ENCODE measurements at regions of chr6 and their contacts with region 1.

Region 1: DNA sequence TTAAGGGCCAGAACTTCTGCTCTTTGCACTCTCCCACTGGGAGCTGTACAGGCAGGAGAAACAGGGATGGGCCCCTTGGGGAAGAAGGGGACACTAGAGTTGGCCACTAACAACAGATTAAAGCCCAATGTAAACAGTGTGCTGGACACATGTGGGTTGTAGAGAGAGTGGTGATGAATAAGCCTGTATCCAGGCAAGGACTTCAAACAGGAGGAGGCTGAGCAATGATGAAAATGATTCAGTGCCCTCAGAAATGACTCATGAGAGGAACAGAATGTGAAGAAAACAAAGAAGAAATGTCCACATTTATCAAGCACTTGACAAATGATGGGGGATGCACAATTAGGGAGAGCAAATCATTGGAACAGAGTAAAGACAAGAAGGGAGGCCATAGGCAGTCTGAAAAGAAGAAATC is 242.3 kb downstream of the TBX18 start:
- DNase-seq: peak; percentile 43 to 69
- H3K4me3 ChIP-seq: no peak overlapping the region
- H3K4me3 Mint-ChIP-seq: peak overlapping the region; percentile 37
- H3K27ac Mint-ChIP-seq: peak overlapping the region; percentile 3
- H3K4me1 ChIP-seq: peaks cover 62% of the 10 kb centered on the region
- H3K4me1 Mint-ChIP-seq: peaks cover 36% of the 10 kb centered on the region
- H3K27me3 ChIP-seq: no peaks in the 10 kb centered on the region
- H3K27me3 Mint-ChIP-seq: no peaks in the 10 kb centered on the region
- CTCF ChIP-seq: no peak

Region 2: GRCh38 chr6:84269947-84270733 is 252.0 kb before region 1 on chr6:
- CTCF ChIA-PET with region 1: no interaction called
- POLR2A ChIA-PET with region 1: no interaction called
- intact Hi-C with region 1: loop called (anchors 2 kb)
- DNase-seq: peak in 1 of 2 experiments; percentile 45
- H3K4me3 ChIP-seq: no peak overlapping the region
- H3K4me3 Mint-ChIP-seq: peak overlapping the region; percentile 50
- H3K27ac Mint-ChIP-seq: peak overlapping the region; percentile 70
- H3K4me1 ChIP-seq: peaks cover 13% of the 10 kb centered on the region
- H3K4me1 Mint-ChIP-seq: peaks cover 29% of the 10 kb centered on the region
- H3K27me3 ChIP-seq: no peaks in the 10 kb centered on the region
- H3K27me3 Mint-ChIP-seq: no peaks in the 10 kb centered on the region
- CTCF ChIP-seq: no peak

Region 3: GRCh38 chr6:84460491-84460890 is 61.7 kb before region 1 on chr6:
- CTCF ChIA-PET with region 1: no interaction called
- POLR2A ChIA-PET with region 1: no interaction called
- intact Hi-C with region 1: loop called (anchors 1 kb)
- DNase-seq: no peak
- H3K4me3 ChIP-seq: no peak overlapping the region
- H3K4me3 Mint-ChIP-seq: no peak overlapping the region
- H3K27ac Mint-ChIP-seq: peak overlapping the region; percentile 53
- H3K4me1 ChIP-seq: peaks cover 5% of the 10 kb centered on the region
- H3K4me1 Mint-ChIP-seq: no peaks in the 10 kb centered on the region
- H3K27me3 ChIP-seq: no peaks in the 10 kb centered on the region
- H3K27me3 Mint-ChIP-seq: no peaks in the 10 kb centered on the region
- CTCF ChIP-seq: no peak

Region 4: DNA sequence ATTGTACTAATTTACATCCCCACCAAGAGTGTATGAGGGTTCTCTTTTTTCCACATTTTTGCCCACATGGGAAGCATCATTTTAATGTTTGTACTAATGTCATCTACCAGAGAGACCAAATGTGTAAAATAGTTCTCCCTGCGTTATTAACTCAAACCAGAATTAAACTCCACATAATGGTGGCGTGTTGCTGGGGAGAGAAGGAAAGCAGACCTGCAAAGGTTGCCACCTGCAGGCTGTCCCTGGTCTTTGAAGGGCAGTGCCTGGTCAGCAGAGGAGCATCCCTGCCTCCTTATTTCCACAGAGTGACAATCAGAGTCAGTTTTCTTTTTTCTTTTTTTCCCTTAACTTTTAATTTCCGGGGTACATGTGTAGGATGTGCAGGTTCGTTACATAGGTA is 27.7 kb after region 1 on chr6:
- CTCF ChIA-PET with region 1: no interaction called
- POLR2A ChIA-PET with region 1: no interaction called
- intact Hi-C with region 1: loop called (anchors 1 kb)
- DNase-seq: peak in 1 of 2 experiments; percentile 12
- H3K4me3 ChIP-seq: no peak overlapping the region
- H3K4me3 Mint-ChIP-seq: no peak overlapping the region
- H3K27ac Mint-ChIP-seq: no peak overlapping the region
- H3K4me1 ChIP-seq: peaks cover 9% of the 10 kb centered on the region
- H3K4me1 Mint-ChIP-seq: peaks cover 15% of the 10 kb centered on the region
- H3K27me3 ChIP-seq: no peaks in the 10 kb centered on the region
- H3K27me3 Mint-ChIP-seq: no peaks in the 10 kb centered on the region
- CTCF ChIP-seq: no peak

Region 5: GRCh38 chr6:84568971-84569370 is 46.8 kb after region 1 on chr6:
- CTCF ChIA-PET with region 1: no interaction called
- POLR2A ChIA-PET with region 1: no interaction called
- intact Hi-C with region 1: loop called (anchors 1 kb)
- DNase-seq: peak in 1 of 2 experiments; percentile 17
- H3K4me3 ChIP-seq: no peak overlapping the region
- H3K4me3 Mint-ChIP-seq: no peak overlapping the region
- H3K27ac Mint-ChIP-seq: no peak overlapping the region
- H3K4me1 ChIP-seq: no peaks in the 10 kb centered on the region
- H3K4me1 Mint-ChIP-seq: no peaks in the 10 kb centered on the region
- H3K27me3 ChIP-seq: no peaks in the 10 kb centered on the region
- H3K27me3 Mint-ChIP-seq: no peaks in the 10 kb centered on the region
- CTCF ChIP-seq: peak; percentile 22 to 37

Region 6: DNA sequence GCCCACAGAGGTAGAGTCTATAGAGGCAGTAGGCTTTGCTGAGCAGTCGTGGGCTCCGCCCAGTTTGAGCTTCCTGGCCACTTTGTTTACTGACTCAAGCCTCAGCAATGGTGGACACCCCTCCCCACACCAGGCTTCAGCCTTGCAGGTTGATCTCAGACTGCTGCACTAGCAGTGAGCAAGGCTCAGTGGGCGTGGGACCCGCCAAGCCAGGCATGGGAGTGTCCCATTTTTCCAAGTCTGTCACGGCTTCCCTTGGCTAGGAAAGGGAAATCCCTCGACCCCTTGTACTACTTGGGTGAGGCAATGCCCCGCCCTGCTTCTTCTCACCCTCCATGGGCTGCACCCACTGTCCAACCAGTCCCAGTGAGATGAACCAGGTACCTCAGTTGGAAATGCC is 792.4 kb after region 1 on chr6:
- CTCF ChIA-PET with region 1: no interaction called
- POLR2A ChIA-PET with region 1: no interaction called
- intact Hi-C with region 1: no loop called
- DNase-seq: no peak
- H3K4me3 ChIP-seq: no peak overlapping the region
- H3K4me3 Mint-ChIP-seq: no peak overlapping the region
- H3K27ac Mint-ChIP-seq: no peak overlapping the region
- H3K4me1 ChIP-seq: no peaks in the 10 kb centered on the region
- H3K4me1 Mint-ChIP-seq: no peaks in the 10 kb centered on the region
- H3K27me3 ChIP-seq: no peaks in the 10 kb centered on the region
- H3K27me3 Mint-ChIP-seq: no peaks in the 10 kb centered on the region
- CTCF ChIP-seq: no peak